ENCODE measurements at regions of chr18 and their contacts with region 1.

Region 1: GRCh38 chr18:59459369-59460079 is 100.5 kb upstream of the LMAN1 start:
- DNase-seq: no peak
- H3K4me3 Mint-ChIP-seq: no peak overlapping the region
- H3K27ac Mint-ChIP-seq: no peak overlapping the region
- H3K4me1 Mint-ChIP-seq: no peaks in the 10 kb centered on the region
- H3K27me3 Mint-ChIP-seq: peaks cover 15% of the 10 kb centered on the region

Region 2: GRCh38 chr18:59470561-59471121 is 11.1 kb after region 1 on chr18:
- CTCF ChIA-PET with region 1: interaction called, 15 read pairs
- intact Hi-C with region 1: no loop called
- DNase-seq: no peak
- H3K4me3 Mint-ChIP-seq: no peak overlapping the region
- H3K27ac Mint-ChIP-seq: no peak overlapping the region
- H3K4me1 Mint-ChIP-seq: no peaks in the 10 kb centered on the region
- H3K27me3 Mint-ChIP-seq: peaks cover 9% of the 10 kb centered on the region

Region 3: DNA sequence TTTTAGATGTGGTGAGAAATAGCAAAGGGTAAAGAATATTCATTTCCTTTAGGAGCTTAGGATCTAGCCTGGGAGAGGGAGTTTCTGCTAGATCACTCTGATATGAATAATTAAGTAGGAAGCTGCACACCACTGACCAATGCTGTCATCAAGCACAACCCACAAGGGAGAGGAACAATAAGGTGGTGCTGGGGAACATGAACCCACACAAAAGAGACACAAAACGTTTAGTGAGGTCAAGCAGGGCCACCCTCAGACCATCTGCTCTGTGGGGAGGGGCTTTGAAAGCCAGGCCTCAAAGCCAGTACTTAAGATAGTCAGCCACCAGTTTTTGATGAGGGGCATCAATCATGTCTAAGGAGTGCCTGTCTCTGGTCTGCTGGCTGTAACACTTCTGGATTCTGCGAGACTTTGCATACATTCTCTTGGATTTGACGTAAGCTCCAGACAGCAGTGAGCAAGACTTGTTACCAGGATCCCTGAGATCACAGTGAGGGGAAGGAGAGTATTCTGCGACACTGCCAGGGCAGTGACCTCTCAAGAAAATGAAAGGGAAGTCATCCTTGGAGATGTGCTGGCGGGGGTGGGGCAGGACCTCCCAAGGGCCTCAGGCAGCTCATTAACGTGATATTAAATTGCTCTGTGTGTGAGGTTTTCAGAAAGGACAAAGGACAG is 110.7 kb after region 1 on chr18:
- CTCF ChIA-PET with region 1: no interaction called
- intact Hi-C with region 1: no loop called
- DNase-seq: no peak
- H3K4me3 Mint-ChIP-seq: no peak overlapping the region
- H3K27ac Mint-ChIP-seq: no peak overlapping the region
- H3K4me1 Mint-ChIP-seq: no peaks in the 10 kb centered on the region
- H3K27me3 Mint-ChIP-seq: peaks cover 1% of the 10 kb centered on the region

Region 4: DNA sequence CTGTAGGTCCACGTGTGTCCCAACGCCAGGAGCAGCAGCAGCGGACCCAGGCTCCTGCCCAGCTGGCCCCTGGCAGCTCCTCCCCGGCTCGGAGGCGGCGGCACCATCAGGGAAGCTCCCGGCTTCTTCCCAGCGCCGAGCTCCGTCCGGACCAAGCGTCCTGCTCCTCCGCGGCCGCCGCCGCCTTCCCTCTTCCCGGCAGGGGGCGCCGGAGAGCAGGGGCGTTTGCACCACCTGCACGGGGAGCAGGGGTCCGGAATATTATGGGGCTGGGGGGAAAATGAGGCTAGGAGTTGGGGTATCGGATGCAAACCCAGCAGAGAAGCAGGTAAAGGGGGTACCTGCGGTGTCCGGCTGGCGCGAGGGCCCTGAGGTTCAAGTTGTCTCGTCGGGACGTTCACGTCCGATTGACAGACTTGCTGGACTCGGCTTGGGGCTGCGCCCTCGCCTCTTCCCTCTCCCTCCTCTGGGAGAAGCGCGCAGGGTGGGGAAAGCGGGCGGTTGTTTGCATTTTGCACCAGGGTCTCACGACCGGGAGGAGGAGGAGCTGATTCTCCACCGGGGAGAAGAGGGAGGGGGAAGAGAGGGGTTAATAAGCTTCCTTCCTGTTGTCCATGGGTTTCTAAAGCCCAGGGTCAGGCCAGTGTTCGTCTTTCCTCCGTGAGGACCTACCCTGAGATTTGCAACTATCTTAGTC is 237.9 kb after region 1 on chr18 and contains the start of gene CCBE1:
- CTCF ChIA-PET with region 1: interaction called, 6 read pairs
- intact Hi-C with region 1: loop called (anchors 1 kb)
- DNase-seq: peak; percentile 52
- H3K4me3 Mint-ChIP-seq: peak within 1 kb of the TSS; percentile 4
- H3K27ac Mint-ChIP-seq: no peak within 1 kb of the TSS
- H3K4me1 Mint-ChIP-seq: peaks cover 13% of the 10 kb centered on the region
- H3K27me3 Mint-ChIP-seq: peaks cover 52% of the 10 kb centered on the region
- total RNA-seq, gene CCBE1: not detected

Region 5: GRCh38 chr18:59988098-59988706 is 528.7 kb after region 1 on chr18:
- CTCF ChIA-PET with region 1: no interaction called
- intact Hi-C with region 1: loop called (anchors 10 kb)
- DNase-seq: peak; percentile 74
- H3K4me3 Mint-ChIP-seq: no peak overlapping the region
- H3K27ac Mint-ChIP-seq: no peak overlapping the region
- H3K4me1 Mint-ChIP-seq: no peaks in the 10 kb centered on the region
- H3K27me3 Mint-ChIP-seq: peaks cover 18% of the 10 kb centered on the region

Region 6: GRCh38 chr18:60935041-60935910 is 1475.8 kb after region 1 on chr18:
- CTCF ChIA-PET with region 1: no interaction called
- intact Hi-C with region 1: no loop called
- DNase-seq: no peak
- H3K4me3 Mint-ChIP-seq: no peak overlapping the region
- H3K27ac Mint-ChIP-seq: no peak overlapping the region
- H3K4me1 Mint-ChIP-seq: no peaks in the 10 kb centered on the region
- H3K27me3 Mint-ChIP-seq: no peaks in the 10 kb centered on the region